ENCODE measurements at regions of chr3 and their contacts with region 1.

Region 1: DNA sequence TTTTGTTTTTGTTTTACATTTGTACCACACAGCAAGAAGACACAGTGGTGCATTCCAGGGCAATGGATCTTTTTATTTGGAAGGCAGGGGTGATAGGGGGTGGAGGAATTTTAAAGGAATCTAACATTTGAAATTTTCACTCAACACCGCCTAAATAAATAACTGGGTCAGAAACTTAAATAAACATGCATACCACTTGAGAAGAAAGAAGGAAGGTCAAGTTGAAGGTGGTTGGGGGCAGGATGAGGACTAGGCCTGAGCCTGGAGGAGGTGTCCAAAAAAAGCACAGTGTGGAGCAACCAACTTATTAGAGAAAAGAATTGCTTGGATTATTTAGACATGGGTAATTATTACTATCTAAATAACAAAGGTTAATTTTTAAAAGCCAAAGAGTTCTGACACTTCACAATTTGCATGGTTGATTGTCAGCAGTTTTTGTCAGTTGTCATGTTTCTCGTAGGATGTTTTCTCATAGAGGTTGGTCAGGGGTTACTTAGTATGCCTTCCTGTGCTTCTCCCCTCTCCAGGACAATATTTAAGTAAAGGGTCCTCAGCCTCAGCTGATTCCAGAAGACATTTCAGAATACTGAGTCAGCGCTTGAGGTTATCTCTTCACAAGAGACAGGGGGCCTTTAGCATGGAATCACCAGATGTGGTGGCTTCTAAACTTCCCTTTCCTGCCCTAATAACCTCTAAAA is 173.7 kb upstream of the SLC2A2 start:
- DNase-seq: no peak
- ATAC-seq: no peak
- H3K4me3 ChIP-seq: no peak overlapping the region
- H3K27ac ChIP-seq: no peak overlapping the region
- H3K4me1 ChIP-seq: peaks cover 0 to 19% (median 4%) of the 10 kb centered on the region in 12 donors
- H3K27me3 ChIP-seq: no peaks in the 10 kb centered on the region
- CTCF ChIP-seq: no peak
- POLR2A ChIP-seq: no peak

Region 2: DNA sequence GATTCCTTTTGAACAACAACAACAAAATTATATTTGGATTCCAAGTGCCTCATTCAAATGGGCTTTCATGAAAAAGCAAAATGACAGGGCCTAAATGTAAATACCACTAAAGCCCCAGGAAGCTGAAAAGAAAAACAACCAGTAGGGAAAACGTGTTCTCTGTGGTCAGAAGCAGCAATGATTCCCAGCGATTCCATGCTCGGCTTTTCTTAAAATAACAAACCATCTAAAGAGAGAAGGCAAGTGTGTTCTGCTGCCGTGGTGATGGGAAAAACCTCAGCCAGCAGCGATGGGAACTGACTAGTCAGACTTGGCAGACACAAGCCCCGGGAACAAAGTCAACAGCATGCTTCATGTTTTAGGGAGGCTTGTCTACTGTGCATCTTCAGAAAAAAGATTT is 106.4 kb after region 1 on chr3:
- intact Hi-C with region 1: loop called in 2 of 10 experiments (anchors 5 to 10 kb)
- DNase-seq: peak; percentile 76 to 84 (median 79)
- ATAC-seq: peak; percentile 91 to 94 (median 93)
- H3K4me3 ChIP-seq: peak overlapping the region in 5 of 12 donors; percentile 6 to 32 (median 7)
- H3K27ac ChIP-seq: peak overlapping the region; percentile 54 to 85 (median 75)
- H3K4me1 ChIP-seq: peaks cover 0 to 34% (median 15%) of the 10 kb centered on the region in 12 donors
- H3K27me3 ChIP-seq: no peaks in the 10 kb centered on the region
- CTCF ChIP-seq: no peak
- POLR2A ChIP-seq: no peak

Measured in heart left ventricle (tissue), 16 donors.